ENCODE measurements at regions of chr13 and their contacts with region 1.

Region 1: GRCh38 chr13:67224148-67224846 is 5.8 kb downstream of the PCDH9 start:
- DNase-seq: peak; percentile 84
- H3K4me3 Mint-ChIP-seq: peak overlapping the region; percentile 69
- H3K27ac Mint-ChIP-seq: peak overlapping the region; percentile 21
- H3K4me1 Mint-ChIP-seq: peaks cover 23% of the 10 kb centered on the region
- H3K27me3 Mint-ChIP-seq: no peaks in the 10 kb centered on the region
- CTCF ChIP-seq: peak; percentile 81

Region 2: DNA sequence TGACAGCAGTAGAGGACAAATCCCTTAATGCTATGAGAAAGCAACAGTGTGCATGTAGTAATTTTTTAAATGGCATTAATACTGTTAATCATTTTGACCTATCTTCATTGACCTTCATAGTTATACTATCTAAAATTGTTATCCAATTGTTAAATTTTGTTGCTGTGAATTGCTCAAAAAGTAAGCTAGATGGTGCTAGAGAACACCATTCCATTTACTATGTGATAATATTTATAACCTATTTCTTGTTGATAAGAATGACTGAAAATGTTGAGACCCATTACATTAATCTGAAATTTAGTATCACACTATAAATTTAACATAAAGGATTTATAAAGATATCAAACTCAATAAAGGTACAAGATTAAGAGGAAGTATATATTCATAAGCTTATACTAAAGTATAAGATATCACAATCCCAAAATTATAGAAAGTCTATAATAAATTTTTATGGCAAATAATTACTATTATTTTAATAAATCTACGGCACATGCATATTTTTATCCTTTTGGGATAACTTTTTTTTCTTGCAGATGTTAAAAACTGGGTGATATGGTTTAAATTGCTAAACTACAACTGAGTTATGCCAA is 1567.5 kb before region 1 on chr13:
- CTCF ChIA-PET with region 1: interaction called, 6 read pairs
- POLR2A ChIA-PET with region 1: no interaction called
- intact Hi-C with region 1: loop called (anchors 1 kb)
- DNase-seq: peak; percentile 27
- H3K4me3 Mint-ChIP-seq: no peak overlapping the region
- H3K27ac Mint-ChIP-seq: no peak overlapping the region
- H3K4me1 Mint-ChIP-seq: no peaks in the 10 kb centered on the region
- H3K27me3 Mint-ChIP-seq: no peaks in the 10 kb centered on the region
- CTCF ChIP-seq: peak; percentile 69

Region 3: GRCh38 chr13:66689628-66690027 is 534.7 kb before region 1 on chr13:
- CTCF ChIA-PET with region 1: interaction called, 11 read pairs
- POLR2A ChIA-PET with region 1: interaction called, 3 read pairs
- intact Hi-C with region 1: loop called (anchors 1 kb)
- DNase-seq: peak; percentile 19
- H3K4me3 Mint-ChIP-seq: no peak overlapping the region
- H3K27ac Mint-ChIP-seq: no peak overlapping the region
- H3K4me1 Mint-ChIP-seq: peaks cover 5% of the 10 kb centered on the region
- H3K27me3 Mint-ChIP-seq: no peaks in the 10 kb centered on the region
- CTCF ChIP-seq: peak; percentile 16

Region 4: GRCh38 chr13:66926851-66927524 is 297.3 kb before region 1 on chr13:
- CTCF ChIA-PET with region 1: interaction called, 6 read pairs
- POLR2A ChIA-PET with region 1: interaction called, 4 read pairs
- intact Hi-C with region 1: loop called (anchors 1 kb)
- DNase-seq: peak; percentile 65
- H3K4me3 Mint-ChIP-seq: no peak overlapping the region
- H3K27ac Mint-ChIP-seq: peak overlapping the region; percentile 92
- H3K4me1 Mint-ChIP-seq: peaks cover 19% of the 10 kb centered on the region
- H3K27me3 Mint-ChIP-seq: no peaks in the 10 kb centered on the region
- CTCF ChIP-seq: no peak

Region 5: GRCh38 chr13:67075239-67075638 is 149.1 kb before region 1 on chr13:
- CTCF ChIA-PET with region 1: interaction called, 3 read pairs
- POLR2A ChIA-PET with region 1: interaction called, 3 read pairs
- intact Hi-C with region 1: loop called (anchors 1 kb)
- DNase-seq: peak; percentile 17
- H3K4me3 Mint-ChIP-seq: no peak overlapping the region
- H3K27ac Mint-ChIP-seq: no peak overlapping the region
- H3K4me1 Mint-ChIP-seq: no peaks in the 10 kb centered on the region
- H3K27me3 Mint-ChIP-seq: no peaks in the 10 kb centered on the region
- CTCF ChIP-seq: peak; percentile 20

Region 6: DNA sequence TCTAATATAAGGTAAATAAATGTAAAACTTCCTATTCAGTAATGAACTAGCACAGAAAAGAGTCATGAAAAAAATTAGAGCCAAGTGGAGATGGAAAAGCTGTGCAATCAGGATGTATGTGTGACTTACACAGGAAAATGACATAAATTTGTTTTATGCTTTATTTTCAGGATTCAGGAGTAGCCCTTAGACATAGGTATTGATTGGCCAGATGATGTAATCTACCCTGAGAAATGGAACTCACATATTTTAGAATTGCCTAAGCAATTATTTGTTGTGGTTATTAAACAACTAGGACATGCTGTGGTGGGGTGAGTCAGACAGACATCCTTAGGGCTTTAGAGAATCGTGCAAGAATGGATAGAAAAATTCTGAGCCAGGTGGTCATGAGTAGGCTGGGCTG is 104.8 kb before region 1 on chr13:
- CTCF ChIA-PET with region 1: interaction called, 4 read pairs
- POLR2A ChIA-PET with region 1: interaction called, 3 read pairs
- intact Hi-C with region 1: loop called (anchors 1 kb)
- DNase-seq: peak; percentile 85
- H3K4me3 Mint-ChIP-seq: peak overlapping the region; percentile 18
- H3K27ac Mint-ChIP-seq: peak overlapping the region; percentile 91
- H3K4me1 Mint-ChIP-seq: peaks cover 37% of the 10 kb centered on the region
- H3K27me3 Mint-ChIP-seq: no peaks in the 10 kb centered on the region
- CTCF ChIP-seq: no peak

Measured in MCF 10A (cell line).